CD4-positive, alpha-beta memory T cell (primary cell): ENCODE measurements at regions of chr6 and their contacts with region 1.

Region 1: GRCh38 chr6:28355743-28356665 is 6.3 kb downstream of the ZKSCAN3 start:
- DNase-seq: peak; percentile 59 to 68 (median 66)
- H3K4me3 ChIP-seq: peak overlapping the region; percentile 43 to 70
- H3K4me3 Mint-ChIP-seq: peak overlapping the region; percentile 86 to 95 (median 91)
- H3K27ac ChIP-seq: peak overlapping the region; percentile 50
- H3K27ac Mint-ChIP-seq: peak overlapping the region in 6 of 7 donors; percentile 40 to 91 (median 88)
- H3K4me1 ChIP-seq: peaks cover 21% of the 10 kb centered on the region
- H3K4me1 Mint-ChIP-seq: peaks cover 17 to 29% (median 25%) of the 10 kb centered on the region in 4 donors
- H3K27me3 ChIP-seq: no peaks in the 10 kb centered on the region
- H3K27me3 Mint-ChIP-seq: no peaks in the 10 kb centered on the region

Region 2: DNA sequence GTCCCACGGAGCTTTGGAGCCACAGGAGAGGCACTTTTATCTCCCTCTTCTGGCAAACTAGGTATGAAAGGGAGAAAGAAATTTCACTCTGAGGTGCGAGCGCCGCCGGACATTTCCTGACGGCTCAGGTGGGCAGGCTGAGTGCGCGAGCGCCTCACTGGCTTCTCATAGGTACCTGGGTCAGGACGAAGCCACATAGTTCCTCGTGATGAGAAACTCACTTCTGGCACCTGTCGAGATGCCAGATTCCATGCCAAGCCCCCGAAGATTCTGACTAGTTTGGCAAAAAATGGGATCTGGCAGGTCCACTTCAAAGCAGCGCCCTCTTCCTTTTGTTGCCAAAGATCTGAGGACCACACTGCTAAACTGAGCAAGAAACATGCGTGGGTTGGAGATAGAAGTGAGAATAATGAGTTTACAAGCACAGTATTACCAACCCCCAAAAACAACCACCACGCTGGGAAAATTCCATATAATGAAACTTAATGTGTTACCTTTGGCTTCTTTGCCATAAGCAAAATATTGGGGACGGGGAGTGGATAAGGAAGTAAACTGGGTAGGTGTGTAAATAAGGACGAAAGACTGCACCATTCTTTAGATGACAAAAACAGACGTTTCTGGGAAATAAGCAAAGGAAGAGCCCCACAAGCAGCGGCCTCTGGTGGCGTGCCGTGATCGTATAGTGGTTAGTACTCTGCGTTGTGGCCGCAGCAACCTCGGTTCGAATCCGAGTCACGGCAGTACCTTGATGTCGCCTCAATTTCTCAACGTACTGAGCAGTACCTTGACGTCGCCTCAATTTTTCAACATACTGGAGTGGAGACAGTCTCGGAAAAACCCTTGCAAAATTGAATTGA is 1198.3 kb before region 1 on chr6:
- CTCF ChIA-PET with region 1: interaction called, 7 read pairs
- POLR2A ChIA-PET with region 1: no interaction called
- intact Hi-C with region 1: loop called (anchors 1 kb)
- DNase-seq: peak; percentile 78 to 92 (median 82)
- H3K4me3 ChIP-seq: peak overlapping the region; percentile 18 to 44
- H3K4me3 Mint-ChIP-seq: peak overlapping the region; percentile 81 to 91 (median 84)
- H3K27ac ChIP-seq: no peak overlapping the region
- H3K27ac Mint-ChIP-seq: peak overlapping the region; percentile 68 to 95 (median 85)
- H3K4me1 ChIP-seq: peaks cover 30% of the 10 kb centered on the region
- H3K4me1 Mint-ChIP-seq: peaks cover 21 to 46% (median 38%) of the 10 kb centered on the region in 4 donors
- H3K27me3 ChIP-seq: no peaks in the 10 kb centered on the region
- H3K27me3 Mint-ChIP-seq: peaks cover 0 to 4% of the 10 kb centered on the region in 2 donors

Region 3: DNA sequence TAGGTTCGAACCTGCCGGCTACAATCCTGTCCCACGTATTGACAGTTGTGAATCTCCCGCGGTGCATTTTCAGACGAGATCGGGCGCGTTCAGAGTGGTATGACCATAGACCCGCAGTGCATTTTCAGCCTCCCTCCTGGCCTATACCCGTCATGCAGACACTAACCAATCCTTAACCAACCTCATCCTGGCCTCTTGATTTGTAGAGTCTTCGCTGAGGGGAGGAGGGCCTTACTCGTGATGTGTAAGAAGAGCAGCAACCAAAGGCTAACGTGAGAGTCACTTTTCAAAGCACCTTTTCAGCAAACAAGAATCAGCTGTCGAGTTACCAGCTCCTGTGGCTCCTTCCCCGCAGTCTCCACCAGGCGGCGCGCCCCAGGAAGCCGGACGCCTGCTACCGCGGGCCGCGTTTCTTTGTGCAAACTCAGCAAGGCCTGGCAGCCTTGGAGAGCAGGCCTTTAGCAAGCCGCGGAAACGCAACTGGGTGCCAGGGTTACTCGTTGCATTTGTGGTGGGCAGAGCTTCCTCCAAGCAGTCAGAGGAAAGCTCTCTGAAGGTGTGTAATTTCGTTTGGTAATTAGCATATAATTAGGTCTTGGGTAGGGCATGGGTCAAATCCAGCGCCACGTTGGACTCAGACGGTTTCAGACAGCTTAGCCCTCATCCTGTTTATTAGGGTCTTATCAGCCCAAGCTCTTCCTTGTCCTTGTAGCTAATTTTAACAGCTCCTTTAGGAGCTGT is 583.6 kb before region 1 on chr6:
- CTCF ChIA-PET with region 1: interaction called, 3 read pairs
- POLR2A ChIA-PET with region 1: no interaction called
- intact Hi-C with region 1: loop called (anchors 10 kb)
- DNase-seq: peak; percentile 82 to 85 (median 84)
- H3K4me3 ChIP-seq: no peak overlapping the region
- H3K4me3 Mint-ChIP-seq: peak overlapping the region in 5 of 8 donors; percentile 0 to 60 (median 51)
- H3K27ac ChIP-seq: no peak overlapping the region
- H3K27ac Mint-ChIP-seq: peak overlapping the region in 5 of 7 donors; percentile 4 to 80 (median 15)
- H3K4me1 ChIP-seq: peaks cover 11% of the 10 kb centered on the region
- H3K4me1 Mint-ChIP-seq: peaks cover 3 to 17% (median 9%) of the 10 kb centered on the region in 4 donors
- H3K27me3 ChIP-seq: peaks cover 5% of the 10 kb centered on the region
- H3K27me3 Mint-ChIP-seq: peaks cover 7 to 26% of the 10 kb centered on the region in 2 donors

Region 4: DNA sequence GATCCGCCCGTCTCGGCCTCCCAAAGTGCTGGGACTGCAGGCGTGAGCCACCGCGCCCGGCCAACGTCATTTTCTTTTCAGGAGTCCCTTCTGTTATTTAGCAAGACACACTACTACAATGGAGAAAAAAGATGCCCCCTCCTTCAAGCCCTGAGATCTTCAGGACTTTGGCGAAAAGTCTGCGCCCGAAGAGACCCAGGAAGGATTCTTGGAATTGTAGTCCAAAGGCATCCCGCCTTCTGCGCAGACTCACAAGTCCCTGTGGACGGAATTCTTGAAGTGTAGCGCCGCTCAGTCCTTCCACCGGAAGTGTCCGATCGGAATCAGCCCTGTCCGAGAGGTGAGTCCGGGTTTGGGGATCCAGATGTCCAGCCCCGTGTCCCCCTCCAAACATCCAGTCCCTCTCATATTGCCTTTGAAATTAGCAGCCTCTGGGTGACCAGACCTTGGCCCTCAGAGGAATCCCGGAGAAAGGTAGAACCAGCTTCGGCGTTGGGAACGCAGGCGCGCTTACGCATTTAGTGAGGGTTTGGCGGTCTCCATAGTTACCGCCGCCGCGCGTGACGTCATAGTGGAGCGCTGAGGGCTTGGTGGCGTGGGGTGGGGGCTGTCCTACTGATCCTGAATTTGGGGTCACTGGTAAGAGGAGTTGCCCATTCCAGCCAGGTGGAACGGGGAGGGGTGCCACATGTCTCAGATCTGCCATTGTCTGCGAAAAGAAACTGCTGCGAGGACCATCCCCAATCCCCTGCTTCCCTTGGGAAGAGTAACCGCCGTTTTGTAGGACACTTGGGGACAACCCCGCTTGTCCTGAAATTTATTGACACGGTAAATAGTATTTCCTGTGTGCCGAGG is 275.1 kb before region 1 on chr6:
- CTCF ChIA-PET with region 1: interaction called, 3 read pairs
- POLR2A ChIA-PET with region 1: no interaction called
- intact Hi-C with region 1: loop called (anchors 2 kb)
- DNase-seq: peak; percentile 92 to 94 (median 93)
- H3K4me3 ChIP-seq: peak overlapping the region; percentile 90 to 94
- H3K4me3 Mint-ChIP-seq: peak overlapping the region; percentile 90 to 99 (median 98)
- H3K27ac ChIP-seq: peak overlapping the region; percentile 92
- H3K27ac Mint-ChIP-seq: peak overlapping the region; percentile 97 to 100 (median 99)
- H3K4me1 ChIP-seq: peaks cover 12% of the 10 kb centered on the region
- H3K4me1 Mint-ChIP-seq: peaks cover 9 to 22% (median 14%) of the 10 kb centered on the region in 4 donors
- H3K27me3 ChIP-seq: no peaks in the 10 kb centered on the region
- H3K27me3 Mint-ChIP-seq: no peaks in the 10 kb centered on the region

Region 5: GRCh38 chr6:28136585-28137504 is 219.2 kb before region 1 on chr6:
- CTCF ChIA-PET with region 1: interaction called, 44 read pairs
- POLR2A ChIA-PET with region 1: interaction called, 17 read pairs
- intact Hi-C with region 1: loop called (anchors 1 kb)
- DNase-seq: peak; percentile 54 to 76 (median 62)
- H3K4me3 ChIP-seq: peak overlapping the region; percentile 64 to 96
- H3K4me3 Mint-ChIP-seq: peak overlapping the region; percentile 92 to 99 (median 94)
- H3K27ac ChIP-seq: peak overlapping the region; percentile 98
- H3K27ac Mint-ChIP-seq: peak overlapping the region; percentile 95 to 100 (median 98)
- H3K4me1 ChIP-seq: peaks cover 51% of the 10 kb centered on the region
- H3K4me1 Mint-ChIP-seq: peaks cover 52 to 88% (median 68%) of the 10 kb centered on the region in 4 donors
- H3K27me3 ChIP-seq: no peaks in the 10 kb centered on the region
- H3K27me3 Mint-ChIP-seq: no peaks in the 10 kb centered on the region

Region 6: GRCh38 chr6:28266962-28267694 is 88.9 kb before region 1 on chr6 and contains the start of gene ZSCAN26:
- CTCF ChIA-PET with region 1: interaction called, 31 read pairs
- POLR2A ChIA-PET with region 1: interaction called, 7 read pairs
- intact Hi-C with region 1: no loop called
- DNase-seq: peak; percentile 86 to 90 (median 88)
- H3K4me3 ChIP-seq: peak within 1 kb of the TSS; percentile 90 to 94
- H3K4me3 Mint-ChIP-seq: peak within 1 kb of the TSS in 1 of 8 donors; percentile 12
- H3K27ac ChIP-seq: peak within 1 kb of the TSS; percentile 70
- H3K27ac Mint-ChIP-seq: no peak within 1 kb of the TSS
- H3K4me1 ChIP-seq: peaks cover 18% of the 10 kb centered on the region
- H3K4me1 Mint-ChIP-seq: peaks cover 4 to 15% (median 11%) of the 10 kb centered on the region in 4 donors
- H3K27me3 ChIP-seq: no peaks in the 10 kb centered on the region
- H3K27me3 Mint-ChIP-seq: peaks cover 0 to under 1% of the 10 kb centered on the region in 2 donors
- total RNA-seq, gene ZSCAN26: 23.3 to 26.5 TPM

Region 7: DNA sequence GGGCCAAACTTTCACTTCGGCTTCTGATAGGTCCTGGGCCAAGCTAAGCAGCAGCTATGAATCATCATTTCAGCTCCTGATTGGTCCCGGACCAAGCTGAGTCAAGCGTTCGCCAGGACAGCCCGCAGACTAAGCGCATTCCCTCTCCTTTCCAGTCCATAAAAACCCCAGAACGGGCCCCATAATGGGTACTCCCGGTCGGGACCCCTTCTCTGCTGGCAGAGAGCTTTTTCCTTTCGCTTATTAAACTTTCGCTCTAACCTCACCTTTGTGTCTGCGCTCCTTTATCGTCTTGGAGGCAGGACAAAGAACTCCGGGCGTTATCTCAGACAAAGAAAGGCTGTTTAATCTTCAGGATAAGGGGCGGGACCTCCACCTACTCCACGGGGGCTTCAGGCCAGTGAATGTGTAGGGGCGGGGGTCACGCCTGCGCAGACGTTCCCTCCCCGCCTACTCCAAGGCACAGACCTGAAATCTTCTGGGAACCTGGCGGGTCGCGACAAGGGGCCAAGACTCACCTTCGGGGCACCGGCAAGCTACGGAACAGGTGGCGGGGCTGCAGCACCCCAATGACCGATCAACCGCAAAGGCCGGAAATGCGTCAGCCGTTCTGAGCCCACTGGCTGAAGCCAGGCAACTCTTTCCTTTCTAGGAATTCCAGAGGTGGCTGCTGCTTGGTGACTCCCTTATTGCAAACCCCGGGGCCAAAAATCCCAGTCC is 20.3 kb before region 1 on chr6 and contains the start of gene ZSCAN31:
- CTCF ChIA-PET with region 1: interaction called, 20 read pairs
- POLR2A ChIA-PET with region 1: interaction called, 5 read pairs
- intact Hi-C with region 1: no loop called
- DNase-seq: peak; percentile 77 to 93 (median 81)
- H3K4me3 ChIP-seq: peak within 1 kb of the TSS; percentile 61 to 85
- H3K4me3 Mint-ChIP-seq: peak within 1 kb of the TSS in 1 of 8 donors; percentile 34
- H3K27ac ChIP-seq: peak within 1 kb of the TSS; percentile 87
- H3K27ac Mint-ChIP-seq: peak within 1 kb of the TSS in 1 of 7 donors; percentile 68
- H3K4me1 ChIP-seq: peaks cover 17% of the 10 kb centered on the region
- H3K4me1 Mint-ChIP-seq: peaks cover 0 to 4% (median 3%) of the 10 kb centered on the region in 4 donors
- H3K27me3 ChIP-seq: no peaks in the 10 kb centered on the region
- H3K27me3 Mint-ChIP-seq: peaks cover 0 to 3% of the 10 kb centered on the region in 2 donors
- total RNA-seq, gene ZSCAN31: 0.73 to 0.97 TPM

Region 8: GRCh38 chr6:28506807-28507475 is 150.9 kb after region 1 on chr6:
- CTCF ChIA-PET with region 1: no interaction called
- POLR2A ChIA-PET with region 1: no interaction called
- intact Hi-C with region 1: no loop called
- DNase-seq: peak in 1 of 5 donors; percentile 17
- H3K4me3 ChIP-seq: no peak overlapping the region
- H3K4me3 Mint-ChIP-seq: peak overlapping the region in 7 of 8 donors; percentile 2 to 61 (median 5)
- H3K27ac ChIP-seq: no peak overlapping the region
- H3K27ac Mint-ChIP-seq: peak overlapping the region in 6 of 7 donors; percentile 6 to 72 (median 64)
- H3K4me1 ChIP-seq: peaks cover 14% of the 10 kb centered on the region
- H3K4me1 Mint-ChIP-seq: peaks cover 9 to 18% (median 15%) of the 10 kb centered on the region in 4 donors
- H3K27me3 ChIP-seq: no peaks in the 10 kb centered on the region
- H3K27me3 Mint-ChIP-seq: peaks cover 7 to 16% of the 10 kb centered on the region in 2 donors